Sciatic nerve (tissue), 2 donors: ENCODE measurements at regions of chr3 and their contacts with region 1.

Region 1: GRCh38 chr3:101809178-101810021 is 30.4 kb downstream of the NXPE3 start:
- DNase-seq: no peak
- ATAC-seq: peak; percentile 46

Region 2: GRCh38 chr3:101303089-101303731 is 506.2 kb before region 1 on chr3:
- intact Hi-C with region 1: no loop called
- DNase-seq: no peak
- ATAC-seq: no peak

Region 3: GRCh38 chr3:102224128-102224527 is 414.7 kb after region 1 on chr3:
- intact Hi-C with region 1: loop called (anchors 5 kb)
- DNase-seq: no peak
- ATAC-seq: peak; percentile 85